ENCODE measurements at regions of chr13 and their contacts with region 1.

Region 1: GRCh38 chr13:63625869-63626268 is 2210.2 kb upstream of the PCDH20 start:
- DNase-seq: no peak
- H3K4me3 ChIP-seq: no peak overlapping the region
- H3K27ac ChIP-seq: no peak overlapping the region
- H3K4me1 ChIP-seq: no peaks in the 10 kb centered on the region
- H3K27me3 ChIP-seq: no peaks in the 10 kb centered on the region
- CTCF ChIP-seq: no peak
- EP300 ChIP-seq: no peak
- POLR2A ChIP-seq: no peak
- RAD21 ChIP-seq: no peak

Region 2: DNA sequence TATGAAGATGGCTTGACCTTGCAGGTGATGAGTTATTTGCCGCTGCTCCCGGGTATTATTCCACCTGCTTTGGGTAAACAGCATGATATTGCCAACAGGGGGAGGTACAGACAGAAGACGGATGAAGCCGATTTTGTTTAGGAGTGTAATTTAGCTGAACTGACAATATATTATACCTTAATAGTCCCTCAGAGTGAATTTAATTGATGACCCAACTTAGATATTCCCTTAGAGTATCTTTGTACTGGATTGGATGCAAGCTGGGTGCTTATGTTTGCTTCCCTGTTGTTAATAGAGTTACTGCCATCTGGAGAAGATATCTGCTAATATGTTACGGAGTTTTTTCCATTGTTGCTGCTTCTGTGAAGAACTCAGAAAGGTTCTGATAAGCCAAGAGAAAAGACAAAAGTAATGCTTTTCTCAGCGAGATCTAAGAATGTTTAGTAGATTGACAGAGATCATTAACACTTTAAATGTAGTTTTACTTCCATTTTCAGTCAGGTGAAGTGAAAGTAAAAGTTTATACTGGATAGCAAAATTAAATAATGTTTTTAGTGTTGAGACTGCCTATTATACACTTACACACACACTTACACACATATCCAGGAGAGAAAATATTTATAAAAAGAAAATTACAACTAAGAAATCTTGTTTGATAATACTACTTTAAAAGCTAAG is 10.6 kb after region 1 on chr13:
- CTCF ChIA-PET with region 1: interaction called, 14 read pairs
- POLR2A ChIA-PET with region 1: no interaction called
- DNase-seq: no peak
- H3K4me3 ChIP-seq: no peak overlapping the region
- H3K27ac ChIP-seq: no peak overlapping the region
- H3K4me1 ChIP-seq: no peaks in the 10 kb centered on the region
- H3K27me3 ChIP-seq: no peaks in the 10 kb centered on the region
- CTCF ChIP-seq: peak in 1 of 3 experiments; percentile 24; a peak in 1 of 4 replicates
- EP300 ChIP-seq: no peak
- POLR2A ChIP-seq: no peak
- RAD21 ChIP-seq: peak; percentile 32 to 55